Adrenal gland (tissue), 19 donors: ENCODE measurements at regions of chr18 and their contacts with region 1.

Region 1: DNA sequence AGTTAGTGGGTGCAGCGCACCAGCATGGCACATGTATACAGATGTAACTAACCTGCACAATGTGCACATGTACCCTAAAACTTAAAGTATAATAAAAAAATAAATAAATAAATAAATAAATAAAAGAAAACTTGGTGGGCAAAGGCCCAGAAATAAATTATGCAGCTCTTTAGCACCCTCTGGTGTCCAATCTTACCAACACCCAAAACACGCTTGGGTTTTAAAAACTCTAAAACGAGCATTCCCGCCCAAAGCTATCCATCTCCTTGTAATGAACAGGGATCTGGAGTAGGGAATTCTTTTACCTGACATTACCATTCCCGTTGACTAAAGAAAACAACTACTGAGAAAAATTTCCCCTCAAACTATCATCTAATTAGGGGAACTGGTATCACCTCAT is 2005.9 kb upstream of the CELF4 start:
- DNase-seq: peak in 3 of 7 donors; percentile 2 to 23 (median 18)
- H3K4me3 ChIP-seq: no peak overlapping the region
- H3K27ac ChIP-seq: no peak overlapping the region
- H3K4me1 ChIP-seq: no peaks in the 10 kb centered on the region
- H3K27me3 ChIP-seq: no peaks in the 10 kb centered on the region
- CTCF ChIP-seq: peak in 5 of 6 experiments; percentile 22 to 61 (median 47)
- POLR2A ChIP-seq: no peak

Region 2: GRCh38 chr18:37778417-37779165 is 1792.9 kb before region 1 on chr18:
- intact Hi-C with region 1: loop called in 1 of 2 experiments (anchors 10 kb)
- DNase-seq: peak; percentile 32 to 89 (median 64)
- H3K4me3 ChIP-seq: no peak overlapping the region
- H3K27ac ChIP-seq: no peak overlapping the region
- H3K4me1 ChIP-seq: no peaks in the 10 kb centered on the region
- H3K27me3 ChIP-seq: no peaks in the 10 kb centered on the region
- CTCF ChIP-seq: peak; percentile 39 to 71 (median 68)
- POLR2A ChIP-seq: no peak

Region 3: GRCh38 chr18:38115201-38115600 is 1456.3 kb before region 1 on chr18:
- intact Hi-C with region 1: loop called in 1 of 2 experiments (anchors 10 kb)
- DNase-seq: no peak
- H3K4me3 ChIP-seq: no peak overlapping the region
- H3K27ac ChIP-seq: no peak overlapping the region
- H3K4me1 ChIP-seq: no peaks in the 10 kb centered on the region
- H3K27me3 ChIP-seq: no peaks in the 10 kb centered on the region
- CTCF ChIP-seq: no peak
- POLR2A ChIP-seq: no peak

Region 4: DNA sequence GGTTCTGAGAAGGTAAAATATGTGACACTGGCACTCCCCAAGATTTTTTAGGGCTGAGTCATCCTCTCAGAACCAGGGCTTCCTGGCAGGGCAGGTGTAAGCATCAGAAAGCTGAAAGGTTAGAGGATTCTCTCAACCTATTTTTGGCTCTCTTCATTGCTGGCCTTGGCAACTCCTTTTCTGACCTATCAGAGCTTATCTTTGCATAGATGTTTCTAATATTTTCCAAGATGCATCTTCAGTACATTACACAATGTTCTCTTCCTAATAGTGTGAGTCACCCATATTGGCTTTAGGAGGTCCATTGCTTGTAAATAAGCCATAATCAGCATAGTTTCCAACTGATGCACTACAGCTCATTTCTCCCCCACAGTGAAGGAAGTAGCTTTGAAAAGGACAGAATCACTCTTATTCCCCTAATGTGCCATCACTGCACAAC is 375.1 kb after region 1 on chr18:
- intact Hi-C with region 1: no loop called
- DNase-seq: peak in 6 of 7 donors; percentile 30 to 83 (median 56)
- H3K4me3 ChIP-seq: no peak overlapping the region
- H3K27ac ChIP-seq: peak overlapping the region in 1 of 5 donors; percentile 73
- H3K4me1 ChIP-seq: no peaks in the 10 kb centered on the region
- H3K27me3 ChIP-seq: no peaks in the 10 kb centered on the region
- CTCF ChIP-seq: no peak
- POLR2A ChIP-seq: no peak